ENCODE measurements at regions of chr17 and their contacts with region 1.

Region 1: GRCh38 chr17:48054238-48055185 is 6.4 kb downstream of the NFE2L1 start:
- DNase-seq: peak; percentile 69 to 83
- H3K4me3 ChIP-seq: peak overlapping the region; percentile 40 to 77 (median 71)
- H3K27ac ChIP-seq: peak overlapping the region; percentile 92 to 96
- H3K4me1 ChIP-seq: peaks cover 37 to 40% of the 10 kb centered on the region in 2 donors
- H3K27me3 ChIP-seq: no peaks in the 10 kb centered on the region
- CTCF ChIP-seq: no peak
- POLR2A ChIP-seq: no peak

Region 2: GRCh38 chr17:47821424-47822391 is 232.8 kb before region 1 on chr17 and contains the start of gene OSBPL7:
- intact Hi-C with region 1: no loop called
- DNase-seq: peak; percentile 57 to 74
- H3K4me3 ChIP-seq: peak within 1 kb of the TSS; percentile 39 to 74 (median 62)
- H3K27ac ChIP-seq: peak within 1 kb of the TSS; percentile 50 to 54
- H3K4me1 ChIP-seq: peaks cover 0 to 7% of the 10 kb centered on the region in 2 donors
- H3K27me3 ChIP-seq: no peaks in the 10 kb centered on the region
- CTCF ChIP-seq: no peak
- POLR2A ChIP-seq: no peak
- total RNA-seq, gene OSBPL7: 3.0 to 10.2 (median 8.9) TPM

Region 3: GRCh38 chr17:48724251-48725003 is 669.9 kb after region 1 on chr17:
- intact Hi-C with region 1: loop called (anchors 5 kb)
- DNase-seq: peak; percentile 44 to 88
- H3K4me3 ChIP-seq: peak overlapping the region in 1 of 3 donors; percentile 50
- H3K27ac ChIP-seq: no peak overlapping the region
- H3K4me1 ChIP-seq: no peaks in the 10 kb centered on the region
- H3K27me3 ChIP-seq: peaks cover 14 to 100% of the 10 kb centered on the region in 2 donors
- CTCF ChIP-seq: peak in 2 of 3 donors; percentile 60 to 65
- POLR2A ChIP-seq: no peak